Common myeloid progenitor, CD34-positive (primary cell): ENCODE measurements at regions of chr1 and their contacts with region 1.

Region 1: DNA sequence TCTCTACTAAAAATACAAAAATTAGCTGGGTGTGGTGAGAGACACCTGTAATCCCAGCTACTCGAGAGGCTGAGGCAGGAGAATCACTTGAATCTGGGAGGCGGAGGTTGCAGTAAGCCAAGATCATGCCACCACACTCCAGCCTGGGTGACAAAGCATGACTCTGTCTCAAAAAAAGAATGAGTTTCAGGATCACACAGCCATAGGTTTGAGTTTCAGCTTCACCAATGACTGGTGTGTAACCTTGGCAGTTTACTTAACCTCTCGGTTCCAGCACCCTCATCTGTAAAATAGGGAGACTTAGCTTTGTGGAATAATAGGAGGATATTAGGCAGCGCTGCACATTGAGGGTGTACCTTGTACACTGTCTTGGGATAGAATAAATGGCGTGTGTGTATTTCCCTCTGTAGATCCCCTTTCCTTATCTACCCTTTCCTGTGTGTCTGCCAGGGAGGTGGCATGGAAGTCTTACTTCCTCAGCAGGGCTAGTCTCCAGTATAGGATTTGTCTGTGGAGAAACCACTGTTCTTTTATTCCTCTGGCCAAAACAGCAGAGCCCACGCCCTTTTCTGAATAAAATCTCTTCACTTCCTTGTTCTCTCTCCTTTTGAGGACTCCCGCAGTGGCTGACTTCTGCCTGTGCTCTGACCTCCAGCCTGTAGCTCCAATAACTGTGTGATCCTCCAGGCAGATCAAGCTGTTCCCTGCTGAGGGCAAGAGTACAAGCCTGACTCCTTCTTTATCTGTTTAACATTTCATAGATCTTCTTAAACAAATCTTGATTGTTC is 90.4 kb downstream of the HHAT start:
- DNase-seq: no peak
- H3K4me3 ChIP-seq: no peak overlapping the region
- H3K27ac ChIP-seq: no peak overlapping the region
- H3K4me1 ChIP-seq: no peaks in the 10 kb centered on the region
- H3K27me3 ChIP-seq: no peaks in the 10 kb centered on the region

Region 2: DNA sequence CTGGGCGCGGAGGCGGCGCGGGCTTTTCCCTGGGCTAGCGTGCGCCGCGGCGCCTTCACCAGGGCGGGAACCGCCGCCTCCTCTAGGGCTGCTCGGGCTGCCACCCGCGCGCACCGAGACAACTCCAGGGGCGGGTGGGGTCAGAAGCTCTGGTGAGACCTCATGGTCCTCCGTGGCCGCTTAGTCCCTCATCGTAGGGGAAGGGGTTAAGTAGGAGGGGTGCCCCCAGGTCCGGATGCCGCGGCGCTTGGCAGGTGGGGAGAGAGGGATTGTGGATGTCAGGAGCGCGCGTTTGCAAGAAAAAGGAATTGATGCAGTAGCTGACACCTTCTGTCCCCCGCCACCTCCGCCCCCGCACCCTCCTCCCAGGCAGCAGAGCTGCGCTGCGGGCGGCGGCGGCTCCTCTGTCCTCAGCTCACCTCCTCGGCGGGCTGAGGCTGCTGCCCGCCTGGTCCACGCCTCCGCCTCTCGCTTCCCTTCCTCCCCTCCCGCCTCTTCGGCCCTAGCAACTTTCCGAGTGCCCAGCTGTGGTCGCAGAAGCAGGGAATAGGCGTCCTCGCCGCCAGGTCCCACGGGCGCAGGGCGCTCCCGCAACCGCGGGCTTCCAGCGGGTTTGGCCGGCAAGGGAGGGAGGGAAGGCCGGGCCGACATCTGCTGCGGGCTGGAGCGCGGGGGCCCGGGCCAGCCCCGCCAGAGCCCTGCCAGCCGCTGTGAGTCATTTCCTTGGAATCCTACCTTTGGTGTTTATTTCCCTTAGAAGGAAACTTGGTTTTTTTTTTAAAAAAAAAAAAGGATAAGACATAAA is 185.6 kb before region 1 on chr1:
- CTCF ChIA-PET with region 1: no interaction called
- POLR2A ChIA-PET with region 1: no interaction called
- DNase-seq: peak in 2 of 3 donors; percentile 38 to 62
- H3K4me3 ChIP-seq: peak overlapping the region; percentile 3 to 59 (median 32)
- H3K27ac ChIP-seq: no peak overlapping the region
- H3K4me1 ChIP-seq: peaks cover 0 to 27% (median 18%) of the 10 kb centered on the region in 4 experiments
- H3K27me3 ChIP-seq: peaks cover 17 to 94% (median 31%) of the 10 kb centered on the region in 5 experiments

Region 3: GRCh38 chr1:210407207-210407886 is 11.7 kb before region 1 on chr1:
- CTCF ChIA-PET with region 1: interaction called, 10 read pairs
- POLR2A ChIA-PET with region 1: no interaction called
- DNase-seq: peak; percentile 54 to 78 (median 66)
- H3K4me3 ChIP-seq: no peak overlapping the region
- H3K27ac ChIP-seq: no peak overlapping the region
- H3K4me1 ChIP-seq: no peaks in the 10 kb centered on the region
- H3K27me3 ChIP-seq: no peaks in the 10 kb centered on the region